K562 (cell line): ENCODE measurements at regions of chr19 and their contacts with region 1.

Region 1: DNA sequence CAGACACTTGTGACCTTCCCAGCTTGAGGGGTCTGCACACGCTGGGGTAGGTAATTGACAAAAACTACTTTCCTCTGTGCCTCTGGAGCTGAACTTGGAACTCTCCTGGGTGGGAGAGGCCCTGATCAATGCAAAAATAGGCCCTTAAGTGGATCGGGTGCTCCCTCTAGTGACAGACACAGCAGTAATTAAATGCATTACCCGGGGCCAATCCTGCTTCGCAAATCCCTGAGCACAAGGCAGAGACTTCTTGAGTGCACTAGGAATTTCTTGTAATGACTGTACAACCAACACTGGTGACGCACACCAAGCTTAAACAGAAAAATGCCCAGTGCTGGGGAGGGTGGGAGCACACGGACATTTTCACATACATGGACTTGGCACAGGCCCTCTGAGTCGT is 10.6 kb upstream of the UBE2S start:
- DNase-seq: peak; percentile 59 to 80 (median 70)
- ATAC-seq: peak; percentile 96
- H3K4me3 ChIP-seq: no peak overlapping the region
- H3K27ac ChIP-seq: no peak overlapping the region; the same call in 2 of the 3 replicates
- H3K4me1 ChIP-seq: peaks cover 4 to 10% of the 10 kb centered on the region in 2 experiments; a peak in 3 of 5 replicates
- H3K27me3 ChIP-seq: no peaks in the 10 kb centered on the region
- CTCF ChIP-seq: peak; percentile 76 to 92 (median 82)
- EP300 ChIP-seq: no peak
- POLR2A ChIP-seq: no peak
- RAD21 ChIP-seq: peak; percentile 81 to 91

Region 2: GRCh38 chr19:55088543-55089341 is 329.4 kb before region 1 on chr19:
- CTCF ChIA-PET with region 1: no interaction called
- POLR2A ChIA-PET with region 1: interaction called, 5 read pairs
- in situ Hi-C with region 1: no loop called
- intact Hi-C with region 1: loop called (anchors 10 kb)
- DNase-seq: peak; percentile 85 to 88 (median 86)
- ATAC-seq: peak; percentile 88
- H3K4me3 ChIP-seq: no peak overlapping the region
- H3K27ac ChIP-seq: no peak overlapping the region; the same call in 2 of the 3 replicates
- H3K4me1 ChIP-seq: peaks cover 0 to 54% of the 10 kb centered on the region in 2 experiments; a peak in 3 of 5 replicates
- H3K27me3 ChIP-seq: no peaks in the 10 kb centered on the region
- CTCF ChIP-seq: peak; percentile 54 to 65 (median 57)
- EP300 ChIP-seq: no peak
- POLR2A ChIP-seq: peak; percentile 33; the same call in 1 of the 2 replicates
- RAD21 ChIP-seq: peak in 1 of 2 experiments; percentile 27; a peak in 1 of 4 replicates

Region 3: DNA sequence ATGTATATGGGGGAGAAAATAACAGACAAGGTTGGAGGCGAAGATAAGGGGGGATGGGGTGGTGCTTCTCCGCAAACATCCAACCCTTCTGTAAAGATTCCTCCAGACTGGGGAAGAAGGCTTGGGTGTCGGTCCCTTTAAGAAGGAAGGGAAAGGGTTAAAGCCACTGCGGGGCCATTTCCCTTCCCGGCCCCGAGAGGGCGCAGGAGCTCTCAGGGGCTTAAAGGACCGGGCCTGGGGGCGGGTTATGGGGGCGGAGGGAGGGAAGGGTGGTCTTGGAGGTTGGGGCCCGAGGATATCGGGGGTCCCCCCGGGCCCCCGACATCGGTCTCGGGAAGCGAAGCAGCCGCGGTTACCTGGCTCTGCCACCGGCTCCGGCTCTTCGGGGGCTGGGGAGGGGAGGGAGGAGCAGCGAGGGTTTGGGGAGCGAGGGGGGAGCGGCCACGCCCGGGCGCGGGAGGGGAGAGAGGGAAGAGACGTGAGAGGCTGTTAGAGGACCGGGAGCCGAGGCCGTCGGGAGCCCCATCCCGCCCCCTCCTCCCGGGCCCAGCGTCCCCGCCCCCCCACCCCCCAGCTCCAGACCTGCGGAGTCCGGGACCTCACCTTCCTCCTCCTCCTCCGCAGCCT is 272.0 kb before region 1 on chr19:
- CTCF ChIA-PET with region 1: interaction called, 4 read pairs
- POLR2A ChIA-PET with region 1: interaction called, 3 read pairs
- in situ Hi-C with region 1: no loop called
- intact Hi-C with region 1: loop called (anchors 2 kb)
- DNase-seq: peak; percentile 88 to 92 (median 90)
- ATAC-seq: peak; percentile 87
- H3K4me3 ChIP-seq: peak overlapping the region; percentile 88
- H3K27ac ChIP-seq: peak overlapping the region; percentile 69
- H3K4me1 ChIP-seq: peaks cover 16 to 54% of the 10 kb centered on the region in 2 experiments
- H3K27me3 ChIP-seq: no peaks in the 10 kb centered on the region
- CTCF ChIP-seq: peak; percentile 84 to 93 (median 85)
- EP300 ChIP-seq: peak; percentile 57; the same call in 1 of the 2 replicates
- POLR2A ChIP-seq: no peak
- RAD21 ChIP-seq: peak; percentile 43 to 53

Region 4: DNA sequence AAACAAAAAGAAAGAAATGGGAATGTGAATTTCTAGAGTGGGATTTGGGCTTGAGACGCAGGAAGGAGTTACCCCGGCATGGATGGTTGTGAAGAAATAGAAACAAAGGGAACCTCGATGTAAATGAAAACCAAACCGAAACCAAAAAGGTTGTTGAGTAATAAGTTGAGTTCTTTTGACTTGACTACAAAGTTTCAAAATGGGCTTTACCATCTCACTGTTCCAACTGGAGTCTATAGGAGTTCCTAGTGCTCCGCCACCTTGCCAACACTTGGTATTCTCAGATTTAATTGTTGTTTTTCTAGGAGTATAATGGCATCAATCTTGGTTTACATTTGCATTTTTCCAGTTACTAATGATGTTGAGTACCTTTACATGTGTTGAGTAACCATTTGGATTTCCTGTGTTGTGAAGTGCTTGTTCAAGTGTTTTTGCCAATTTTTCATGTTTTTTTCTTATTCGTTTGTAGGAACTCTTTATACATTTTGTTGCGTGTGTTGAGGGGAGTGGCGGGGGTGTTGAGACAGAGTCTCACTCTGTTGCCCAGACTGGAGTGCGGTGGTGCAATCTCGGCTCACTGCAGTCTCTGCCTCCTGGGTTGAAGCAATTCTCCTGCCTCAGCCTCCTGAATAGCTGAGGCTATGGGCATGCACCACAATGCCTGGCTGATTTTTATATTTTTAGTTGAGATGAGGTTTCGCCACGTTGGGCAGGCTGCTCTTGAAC is 19.8 kb before region 1 on chr19:
- CTCF ChIA-PET with region 1: no interaction called
- POLR2A ChIA-PET with region 1: interaction called, 10 read pairs
- in situ Hi-C with region 1: no loop called
- intact Hi-C with region 1: no loop called
- DNase-seq: no peak
- ATAC-seq: no peak
- H3K4me3 ChIP-seq: no peak overlapping the region
- H3K27ac ChIP-seq: no peak overlapping the region
- H3K4me1 ChIP-seq: peaks cover 0 to 12% of the 10 kb centered on the region in 2 experiments; a peak in 4 of 5 replicates
- H3K27me3 ChIP-seq: no peaks in the 10 kb centered on the region
- CTCF ChIP-seq: no peak
- EP300 ChIP-seq: no peak
- POLR2A ChIP-seq: no peak
- RAD21 ChIP-seq: no peak